ENCODE measurements at regions of chr1 and their contacts with region 1.

Region 1: DNA sequence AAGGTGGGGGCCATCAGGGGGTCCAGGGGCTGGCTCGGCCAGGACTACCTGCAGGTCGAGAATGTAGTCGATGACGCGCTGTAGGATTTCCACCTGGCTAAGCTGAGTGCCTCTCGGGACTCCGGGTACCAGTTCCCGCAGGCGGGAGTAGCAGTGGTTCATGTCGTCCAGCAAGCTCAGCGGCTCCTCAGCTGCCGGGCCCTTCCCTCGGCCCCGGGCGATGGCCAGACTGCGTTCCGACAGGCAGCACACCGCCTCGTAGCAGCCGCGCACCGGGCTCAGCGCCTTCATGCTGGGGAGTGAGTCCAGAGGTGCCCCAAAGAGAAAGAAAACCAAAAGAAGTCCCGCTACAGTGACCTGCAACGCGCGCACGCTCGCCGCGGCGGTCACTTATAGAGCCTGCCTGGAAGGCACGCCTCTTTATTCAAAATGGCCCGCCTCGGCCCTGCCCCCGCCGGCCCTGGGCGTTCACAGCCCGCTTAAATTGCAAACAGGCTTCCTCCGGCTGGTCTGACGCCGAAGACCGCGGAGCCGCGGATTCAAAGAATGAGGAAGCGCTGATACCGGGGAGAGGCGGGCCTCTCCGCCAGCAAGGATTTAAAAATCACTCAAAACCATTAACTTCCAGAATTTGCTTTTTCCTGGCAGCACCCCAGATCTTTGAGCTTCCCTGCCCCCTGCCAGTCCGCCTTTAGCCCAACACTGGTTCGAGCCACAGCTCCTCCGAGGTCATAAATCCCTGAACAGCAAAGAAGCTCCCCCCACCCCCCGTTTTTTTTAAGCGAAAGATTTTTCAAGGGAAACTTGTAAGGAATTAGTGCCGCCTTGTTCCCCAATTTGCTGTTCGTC is at the start of gene ID3:
- DNase-seq: peak; percentile 94 to 99
- H3K4me3 ChIP-seq: peak within 1 kb of the TSS; percentile 89 to 95
- H3K27ac ChIP-seq: peak within 1 kb of the TSS; percentile 92
- H3K4me1 ChIP-seq: peaks cover 22 to 33% of the 10 kb centered on the region in 2 donors
- H3K27me3 ChIP-seq: no peaks in the 10 kb centered on the region
- CTCF ChIP-seq: peak in 1 of 3 experiments; percentile 3
- total RNA-seq, gene ID3: 1,094 TPM

Region 2: DNA sequence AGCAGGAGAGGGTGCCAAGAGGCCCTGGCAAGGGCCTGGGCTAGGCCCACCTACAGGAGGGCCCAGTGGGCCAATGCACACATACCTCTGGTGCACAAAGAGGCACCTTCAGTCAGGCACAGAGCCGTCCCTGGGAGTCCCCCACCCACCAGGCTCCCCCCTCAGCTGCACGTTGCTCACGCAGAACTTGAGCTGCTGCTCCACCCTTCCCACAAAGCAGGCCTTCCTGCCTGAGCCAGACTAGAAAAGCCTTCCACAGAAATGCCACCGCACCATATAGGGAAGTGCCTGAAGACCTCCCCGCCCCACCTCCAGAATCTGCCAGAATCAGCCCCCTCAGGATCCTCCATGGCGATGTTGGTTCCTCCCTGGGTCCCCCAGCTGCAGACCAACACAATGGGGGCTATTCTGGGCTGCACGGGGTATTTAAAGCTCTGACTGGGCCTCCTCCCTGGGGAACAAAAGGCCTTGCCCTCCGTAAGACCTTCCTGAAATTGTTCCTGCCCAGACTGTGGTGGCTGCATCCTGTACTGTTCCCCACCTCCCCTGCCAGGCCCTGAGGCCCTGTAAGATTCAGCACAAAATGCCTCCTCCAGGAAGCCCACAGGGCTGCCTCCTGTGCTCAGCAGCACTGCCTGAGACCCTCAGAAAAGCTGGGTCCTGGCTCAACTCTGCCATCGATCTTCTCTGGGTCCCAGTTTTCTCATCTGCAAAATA is 1649.4 kb before region 1 on chr1:
- intact Hi-C with region 1: loop called (anchors 10 kb)
- DNase-seq: peak; percentile 69 to 90
- H3K4me3 ChIP-seq: no peak overlapping the region
- H3K27ac ChIP-seq: peak overlapping the region; percentile 94 to 96
- H3K4me1 ChIP-seq: peaks cover 74 to 100% of the 10 kb centered on the region in 2 donors
- H3K27me3 ChIP-seq: no peaks in the 10 kb centered on the region
- CTCF ChIP-seq: peak in 1 of 3 experiments; percentile 11

Region 3: DNA sequence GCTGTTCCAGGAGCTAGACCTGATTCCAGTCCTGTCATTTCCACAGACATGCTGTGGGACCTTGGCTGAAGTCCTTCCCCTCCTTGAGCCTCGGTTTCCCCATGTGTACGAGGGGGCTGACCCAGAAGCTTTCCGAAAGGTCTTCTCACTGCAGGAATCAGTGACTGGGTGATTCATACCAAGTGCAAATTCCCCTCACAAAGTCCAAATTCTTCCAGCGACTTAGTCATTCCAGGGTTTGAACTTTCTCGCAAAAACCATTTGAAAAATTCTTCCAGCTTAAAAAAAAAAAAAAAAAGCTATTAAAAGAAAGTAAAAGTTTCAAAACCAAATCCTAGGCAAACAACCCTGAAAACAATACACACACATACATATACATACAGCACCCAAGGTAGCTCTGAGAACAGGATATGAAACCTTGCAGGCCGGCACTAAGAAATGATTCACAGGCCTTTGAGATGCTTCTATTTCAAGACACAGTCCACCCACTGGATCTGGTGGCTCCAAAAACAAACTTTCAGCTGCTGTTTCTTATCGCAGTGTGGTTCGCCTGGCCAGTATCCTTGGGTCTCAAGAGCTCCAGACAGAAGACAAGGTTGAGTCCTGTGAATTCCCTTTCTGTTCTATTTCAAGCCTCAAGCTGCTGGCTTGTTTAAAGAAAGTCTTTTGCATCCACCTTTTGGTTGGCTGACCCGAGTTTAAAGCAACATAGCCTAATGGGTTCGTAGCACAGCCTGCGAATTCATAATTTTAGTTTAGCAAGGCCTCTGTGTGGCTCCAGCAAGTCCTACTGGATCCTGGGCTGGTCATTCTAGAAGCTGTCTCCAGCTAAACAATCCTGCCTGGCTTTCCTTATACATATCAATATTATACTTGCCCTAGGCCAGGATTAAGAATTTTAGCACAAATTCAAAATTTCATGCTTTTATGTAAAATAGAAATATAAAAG is 18.0 kb after region 1 on chr1:
- intact Hi-C with region 1: loop called (anchors 1 kb)
- DNase-seq: peak; percentile 18 to 88
- H3K4me3 ChIP-seq: peak overlapping the region; percentile 31 to 64
- H3K27ac ChIP-seq: peak overlapping the region; percentile 93 to 94
- H3K4me1 ChIP-seq: peaks cover 22 to 38% of the 10 kb centered on the region in 2 donors
- H3K27me3 ChIP-seq: no peaks in the 10 kb centered on the region
- CTCF ChIP-seq: no peak

Region 4: DNA sequence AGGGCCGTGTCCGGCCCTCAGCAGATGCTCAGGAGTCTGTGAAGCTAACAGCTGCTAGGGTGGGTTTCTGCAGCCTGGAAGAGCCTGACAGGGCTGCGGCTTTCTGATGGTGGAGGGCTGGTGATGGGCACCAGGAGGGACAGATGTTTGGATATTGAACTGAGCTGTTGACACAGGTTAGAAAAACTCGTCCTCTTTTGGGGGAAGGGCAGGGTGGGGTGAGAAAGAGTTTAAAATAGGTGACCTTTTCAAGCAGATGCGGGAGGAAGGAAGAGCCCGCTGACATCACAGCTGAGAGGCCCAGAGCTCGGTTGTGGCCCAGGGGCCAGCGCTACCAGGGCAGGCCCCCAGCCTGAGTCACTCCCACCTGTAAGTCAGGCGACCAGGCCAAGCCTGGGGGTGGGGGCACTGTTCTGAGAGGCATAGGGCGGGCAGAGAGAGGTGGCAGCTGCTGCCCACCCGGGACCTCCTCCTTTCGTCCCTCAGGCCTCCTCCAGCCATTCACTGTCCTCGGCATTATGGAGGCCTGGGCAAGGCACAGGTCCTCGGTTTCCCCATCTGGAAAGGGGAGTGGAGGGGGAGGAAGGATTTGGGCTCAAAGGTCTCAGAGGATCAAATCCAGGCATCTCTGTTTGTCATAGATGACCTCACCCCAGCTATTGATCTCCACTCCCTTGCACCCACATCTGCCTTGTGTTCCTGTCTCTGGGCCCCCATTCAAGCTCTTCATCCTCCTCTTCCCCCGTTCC is 32.3 kb after region 1 on chr1:
- intact Hi-C with region 1: loop called (anchors 1 kb)
- DNase-seq: no peak
- H3K4me3 ChIP-seq: no peak overlapping the region
- H3K27ac ChIP-seq: no peak overlapping the region
- H3K4me1 ChIP-seq: no peaks in the 10 kb centered on the region
- H3K27me3 ChIP-seq: no peaks in the 10 kb centered on the region
- CTCF ChIP-seq: no peak

Region 5: GRCh38 chr1:23634842-23635651 is 75.7 kb after region 1 on chr1:
- intact Hi-C with region 1: loop called (anchors 2 kb)
- DNase-seq: peak in 1 of 2 donors; percentile 85
- H3K4me3 ChIP-seq: peak overlapping the region; percentile 58 to 68
- H3K27ac ChIP-seq: peak overlapping the region; percentile 89 to 91
- H3K4me1 ChIP-seq: peaks cover 0 to 3% of the 10 kb centered on the region in 2 donors
- H3K27me3 ChIP-seq: no peaks in the 10 kb centered on the region
- CTCF ChIP-seq: peak; percentile 84 to 94 (median 89)

Region 6: GRCh38 chr1:24018611-24019580 is 459.5 kb after region 1 on chr1:
- intact Hi-C with region 1: loop called (anchors 10 kb)
- DNase-seq: peak; percentile 83 to 99
- H3K4me3 ChIP-seq: peak overlapping the region in 1 of 2 donors; percentile 34
- H3K27ac ChIP-seq: peak overlapping the region; percentile 89 to 91
- H3K4me1 ChIP-seq: peaks cover 30 to 80% of the 10 kb centered on the region in 2 donors
- H3K27me3 ChIP-seq: no peaks in the 10 kb centered on the region
- CTCF ChIP-seq: no peak

Measured in ascending aorta (tissue), 2 donors.